ENCODE measurements at regions of chr7 and their contacts with region 1.

Region 1: GRCh38 chr7:23273141-23273599 is 26.0 kb upstream of the MALSU1 start:
- DNase-seq: peak; percentile 80
- H3K4me3 ChIP-seq: peak overlapping the region; percentile 7 to 25
- H3K27ac ChIP-seq: peak overlapping the region in 1 of 2 experiments; percentile 30; a peak in 2 of 4 replicates
- H3K4me1 ChIP-seq: peaks cover 5 to 9% of the 10 kb centered on the region in 2 experiments
- H3K27me3 ChIP-seq: no peaks in the 10 kb centered on the region
- CTCF ChIP-seq: peak; percentile 99
- EP300 ChIP-seq: peak in 1 of 2 experiments; percentile 71; a peak in 2 of 4 replicates
- RAD21 ChIP-seq: peak; percentile 83

Region 2: DNA sequence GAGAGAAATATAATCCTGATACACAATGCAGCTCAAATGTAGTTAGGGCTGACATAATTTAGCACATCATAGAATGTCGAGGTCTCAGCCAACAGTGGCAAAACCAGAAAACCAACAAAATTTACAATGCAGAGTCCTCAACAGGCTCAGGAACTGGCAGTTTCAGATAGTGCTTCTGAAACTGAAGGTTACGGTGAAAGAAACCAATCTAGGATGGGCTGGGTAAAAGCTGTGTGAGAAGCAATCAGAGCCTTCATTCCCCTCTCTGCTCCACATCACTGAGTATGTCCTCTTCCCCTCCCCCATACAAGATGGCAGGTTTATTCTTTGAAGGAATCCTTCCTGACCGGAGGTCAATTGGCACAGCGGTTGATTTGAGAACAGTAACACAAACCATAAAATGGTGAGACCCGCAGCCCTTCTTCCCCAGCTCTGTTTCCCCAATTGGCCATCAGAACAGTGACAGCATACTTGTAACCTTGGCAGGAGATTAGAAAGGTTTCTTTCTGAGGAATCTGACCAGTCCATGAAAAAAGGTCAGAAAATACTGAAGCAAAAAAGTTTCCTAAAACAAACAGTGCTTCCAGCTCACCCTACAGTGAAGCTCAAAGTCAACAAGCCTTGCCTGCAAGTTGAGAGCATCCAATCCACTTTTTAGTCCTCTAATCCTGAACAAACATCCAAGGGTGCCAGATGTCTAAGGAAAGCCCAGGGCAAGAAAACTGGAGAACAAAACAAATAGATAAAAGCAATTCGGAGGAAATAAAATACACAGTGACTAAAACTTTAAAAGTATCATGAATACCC is 600.1 kb before region 1 on chr7:
- CTCF ChIA-PET with region 1: no interaction called
- POLR2A ChIA-PET with region 1: no interaction called
- DNase-seq: no peak
- H3K4me3 ChIP-seq: no peak overlapping the region
- H3K27ac ChIP-seq: no peak overlapping the region
- H3K4me1 ChIP-seq: no peaks in the 10 kb centered on the region
- H3K27me3 ChIP-seq: peaks cover 11% of the 10 kb centered on the region
- CTCF ChIP-seq: no peak
- EP300 ChIP-seq: no peak
- RAD21 ChIP-seq: no peak

Region 3: GRCh38 chr7:23191021-23191420 is 82.1 kb before region 1 on chr7:
- CTCF ChIA-PET with region 1: interaction called, 13 read pairs
- POLR2A ChIA-PET with region 1: no interaction called
- DNase-seq: peak; percentile 83
- H3K4me3 ChIP-seq: no peak overlapping the region
- H3K27ac ChIP-seq: peak overlapping the region in 1 of 2 experiments; percentile 70; a peak in 2 of 4 replicates
- H3K4me1 ChIP-seq: peaks cover 0 to 9% of the 10 kb centered on the region in 2 experiments; a peak in 2 of 4 replicates
- H3K27me3 ChIP-seq: no peaks in the 10 kb centered on the region
- CTCF ChIP-seq: no peak
- EP300 ChIP-seq: peak in 1 of 2 experiments; percentile 58; a peak in 1 of 4 replicates
- RAD21 ChIP-seq: 0 out of 2 replicates have a peak, but pooled peaks have one; percentile 26

Region 4: GRCh38 chr7:23247603-23248335 is 25.4 kb before region 1 on chr7:
- CTCF ChIA-PET with region 1: interaction called, 359 read pairs
- POLR2A ChIA-PET with region 1: no interaction called
- DNase-seq: no peak
- H3K4me3 ChIP-seq: peak overlapping the region in 1 of 2 experiments; percentile 33; a peak in 1 of 4 replicates
- H3K27ac ChIP-seq: peak overlapping the region; percentile 71 to 89; a peak in 2 of 4 replicates
- H3K4me1 ChIP-seq: peaks cover 6 to 7% of the 10 kb centered on the region in 2 experiments; a peak in 3 of 4 replicates
- H3K27me3 ChIP-seq: no peaks in the 10 kb centered on the region
- CTCF ChIP-seq: no peak
- EP300 ChIP-seq: no peak
- RAD21 ChIP-seq: no peak

Region 5: GRCh38 chr7:23315366-23315765 is 42.2 kb after region 1 on chr7:
- CTCF ChIA-PET with region 1: interaction called, 10 read pairs
- POLR2A ChIA-PET with region 1: no interaction called
- DNase-seq: no peak
- H3K4me3 ChIP-seq: no peak overlapping the region
- H3K27ac ChIP-seq: no peak overlapping the region
- H3K4me1 ChIP-seq: no peaks in the 10 kb centered on the region
- H3K27me3 ChIP-seq: no peaks in the 10 kb centered on the region
- CTCF ChIP-seq: no peak
- EP300 ChIP-seq: no peak
- RAD21 ChIP-seq: no peak

Region 6: DNA sequence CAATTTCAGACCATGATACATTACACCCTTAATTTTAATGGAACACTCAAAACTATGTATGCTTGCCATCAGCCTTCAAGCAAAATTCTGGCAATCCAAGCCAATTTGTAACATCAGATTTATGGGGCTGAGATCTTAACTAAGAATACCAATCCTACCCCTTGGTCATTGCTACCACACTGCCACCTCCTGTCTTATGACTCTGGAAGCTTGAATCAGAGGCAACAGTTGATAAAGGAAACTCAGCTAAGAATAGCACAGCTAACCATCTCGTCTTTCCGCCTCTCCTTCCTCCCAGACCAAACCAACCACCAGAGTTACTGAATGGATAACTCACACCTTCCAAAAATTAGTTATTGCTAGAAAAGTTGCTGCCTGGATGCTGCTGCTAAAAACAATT is 189.7 kb after region 1 on chr7:
- CTCF ChIA-PET with region 1: interaction called, 45 read pairs
- POLR2A ChIA-PET with region 1: no interaction called
- DNase-seq: peak; percentile 48
- H3K4me3 ChIP-seq: no peak overlapping the region
- H3K27ac ChIP-seq: peak overlapping the region in 1 of 2 experiments; percentile 28; a peak in 3 of 4 replicates
- H3K4me1 ChIP-seq: peaks cover 30 to 36% of the 10 kb centered on the region in 2 experiments
- H3K27me3 ChIP-seq: no peaks in the 10 kb centered on the region
- CTCF ChIP-seq: peak; percentile 65
- EP300 ChIP-seq: no peak; a peak in 1 of 4 replicates
- RAD21 ChIP-seq: peak; percentile 73

Region 7: GRCh38 chr7:23539494-23539907 is 266.3 kb after region 1 on chr7:
- CTCF ChIA-PET with region 1: interaction called, 72 read pairs
- POLR2A ChIA-PET with region 1: interaction called, 6 read pairs
- DNase-seq: no peak
- H3K4me3 ChIP-seq: no peak overlapping the region
- H3K27ac ChIP-seq: no peak overlapping the region
- H3K4me1 ChIP-seq: no peaks in the 10 kb centered on the region
- H3K27me3 ChIP-seq: no peaks in the 10 kb centered on the region
- CTCF ChIP-seq: no peak
- EP300 ChIP-seq: no peak
- RAD21 ChIP-seq: no peak